Activated T-helper 2 cell treated with anti-CD3 and anti-CD28 coated beads, Interferon-gamma antibody, Interleukin-2, Interleukin-4, amounts not matched to agents 10 μg/mL and 5 μg/mL and 100 μg/mL, durations not matched to agents 14 hours and 24 hours and 36 hours (primary cell): ENCODE measurements at regions of chr11 and their contacts with region 1.

Region 1: DNA sequence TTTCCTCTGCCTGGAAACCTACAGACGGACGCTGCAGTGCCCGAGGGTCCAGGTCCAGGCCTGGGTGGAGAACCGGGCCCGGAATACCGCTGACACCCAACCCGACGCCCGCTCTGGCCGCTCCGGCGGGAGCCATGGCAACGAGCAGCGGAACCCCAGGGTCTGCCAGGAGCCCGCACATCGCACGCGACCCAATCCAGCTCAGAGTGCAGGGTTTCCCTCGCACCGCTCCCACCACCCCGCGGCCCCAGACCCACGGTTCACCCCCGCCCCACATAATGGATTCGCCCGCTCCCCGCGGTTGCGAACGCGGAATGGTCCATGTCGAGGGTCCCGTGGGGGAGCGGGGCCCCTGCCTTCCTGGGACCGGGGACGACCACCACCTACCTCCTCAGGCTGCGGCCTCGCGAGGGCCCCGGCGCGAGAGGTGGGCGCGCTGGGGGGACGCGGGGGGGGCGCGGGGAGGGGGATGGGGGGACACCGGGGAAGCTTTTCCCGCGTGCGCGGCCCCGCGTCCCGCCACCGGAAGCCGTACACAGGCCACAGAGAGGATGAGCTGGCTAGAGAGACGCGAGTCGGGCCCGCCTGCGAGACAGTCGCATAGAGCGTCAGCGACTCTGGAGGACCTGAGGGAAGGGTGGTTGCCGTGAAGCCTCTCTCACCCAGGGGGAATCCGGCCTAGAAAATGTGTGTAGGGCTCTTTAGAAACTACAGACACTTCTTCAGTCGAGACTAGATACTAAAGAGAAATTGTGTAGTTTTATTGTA is at the start of gene SSRP1:
- DNase-seq: peak; percentile 81
- H3K4me3 Mint-ChIP-seq: peak within 1 kb of the TSS; percentile 92
- H3K27ac Mint-ChIP-seq: peak within 1 kb of the TSS; percentile 95
- H3K4me1 Mint-ChIP-seq: peaks cover 29% of the 10 kb centered on the region
- H3K27me3 Mint-ChIP-seq: peaks cover 10% of the 10 kb centered on the region
- total RNA-seq, gene SSRP1: 214 and 218 TPM in 2 replicates

Region 2: GRCh38 chr11:57324886-57325734 is 10.4 kb before region 1 on chr11 and contains the start of gene TNKS1BP1:
- intact Hi-C with region 1: loop called (anchors 1 kb)
- DNase-seq: peak; percentile 86
- H3K4me3 Mint-ChIP-seq: peak within 1 kb of the TSS; percentile 84
- H3K27ac Mint-ChIP-seq: peak within 1 kb of the TSS; percentile 92
- H3K4me1 Mint-ChIP-seq: peaks cover 51% of the 10 kb centered on the region
- H3K27me3 Mint-ChIP-seq: no peaks in the 10 kb centered on the region
- total RNA-seq, gene TNKS1BP1: 15.6 and 16.5 TPM in 2 replicates

Region 3: GRCh38 chr11:57379732-57380131 is 44.2 kb after region 1 on chr11:
- intact Hi-C with region 1: no loop called
- DNase-seq: no peak
- H3K4me3 Mint-ChIP-seq: no peak overlapping the region
- H3K27ac Mint-ChIP-seq: no peak overlapping the region
- H3K4me1 Mint-ChIP-seq: no peaks in the 10 kb centered on the region
- H3K27me3 Mint-ChIP-seq: peaks cover 2% of the 10 kb centered on the region

Region 4: GRCh38 chr11:57406337-57406904 is 70.9 kb after region 1 on chr11:
- intact Hi-C with region 1: loop called (anchors 2 kb)
- DNase-seq: no peak
- H3K4me3 Mint-ChIP-seq: peak overlapping the region; percentile 2
- H3K27ac Mint-ChIP-seq: peak overlapping the region; percentile 98
- H3K4me1 Mint-ChIP-seq: peaks cover 30% of the 10 kb centered on the region
- H3K27me3 Mint-ChIP-seq: no peaks in the 10 kb centered on the region

Region 5: DNA sequence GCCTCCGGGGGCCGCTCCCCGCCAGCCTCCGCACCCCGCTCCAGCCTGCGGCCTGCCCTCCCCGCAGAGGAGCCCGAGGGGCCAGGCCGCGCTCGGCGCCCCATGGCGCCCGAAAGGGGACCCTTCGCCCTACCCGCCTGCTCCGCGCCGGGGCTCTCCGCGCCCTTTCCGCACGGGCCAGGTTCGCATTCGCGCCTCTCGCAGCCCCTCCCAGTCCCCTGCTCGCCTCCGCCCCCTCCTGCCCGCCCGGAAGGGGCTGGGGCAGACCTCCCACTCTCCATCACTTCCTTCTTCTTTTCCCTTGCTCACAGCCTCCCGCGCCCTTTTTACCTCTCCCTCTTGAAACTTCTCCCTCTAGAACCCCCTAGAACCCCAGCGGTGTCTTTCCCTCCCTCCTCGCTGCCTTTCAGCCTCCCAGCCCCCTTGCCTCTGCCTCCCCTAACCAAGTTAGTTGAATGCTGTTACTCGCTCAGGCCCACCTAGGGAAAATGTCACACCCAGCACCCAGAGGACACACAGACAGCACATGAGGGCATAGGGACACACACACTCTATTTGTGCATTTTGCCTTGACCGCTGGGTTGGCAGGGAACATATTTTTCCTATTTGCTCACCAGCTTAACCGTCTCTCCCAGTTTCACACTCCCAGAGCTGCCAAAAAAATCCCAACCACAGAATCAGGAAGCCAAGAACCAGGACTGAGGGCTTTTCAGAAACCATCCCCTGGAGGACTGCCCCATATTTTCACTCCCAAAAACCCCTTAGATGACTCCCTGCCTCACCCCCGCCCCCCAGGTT is 91.6 kb after region 1 on chr11 and contains the start of gene SLC43A3:
- intact Hi-C with region 1: loop called (anchors 5 kb)
- DNase-seq: peak; percentile 66
- H3K4me3 Mint-ChIP-seq: peak within 1 kb of the TSS; percentile 91
- H3K27ac Mint-ChIP-seq: peak within 1 kb of the TSS; percentile 64
- H3K4me1 Mint-ChIP-seq: peaks cover 44% of the 10 kb centered on the region
- H3K27me3 Mint-ChIP-seq: peaks cover 3% of the 10 kb centered on the region
- total RNA-seq, gene SLC43A3: 174 and 189 TPM in 2 replicates

Region 6: GRCh38 chr11:57644748-57645688 is 309.5 kb after region 1 on chr11:
- intact Hi-C with region 1: loop called (anchors 5 kb)
- DNase-seq: peak; percentile 75
- H3K4me3 Mint-ChIP-seq: no peak overlapping the region
- H3K27ac Mint-ChIP-seq: no peak overlapping the region
- H3K4me1 Mint-ChIP-seq: peaks cover 48% of the 10 kb centered on the region
- H3K27me3 Mint-ChIP-seq: peaks cover 46% of the 10 kb centered on the region

Region 7: DNA sequence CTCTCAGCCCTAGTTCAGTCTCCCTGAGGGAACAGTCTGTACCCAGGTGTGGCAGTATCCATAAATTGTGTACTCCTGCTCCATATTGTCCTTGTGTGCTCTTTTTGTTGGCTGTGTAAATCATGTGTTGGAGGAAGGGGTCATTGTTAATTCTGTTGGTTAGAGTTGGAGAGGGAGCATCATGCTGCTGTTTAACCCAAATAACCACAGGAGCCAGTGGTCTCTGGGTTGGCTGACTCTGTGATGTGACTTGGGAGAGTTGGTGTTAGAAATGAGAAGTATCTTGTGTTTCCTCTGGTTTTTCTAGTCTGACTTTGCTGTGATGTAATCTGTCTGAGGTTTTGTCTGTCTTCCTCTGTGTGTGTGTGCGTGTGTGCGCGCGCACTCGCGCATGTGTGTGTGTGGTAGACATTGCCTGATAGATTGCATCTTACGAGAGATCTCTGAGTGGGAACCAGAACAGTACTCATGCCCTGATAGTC is 456.6 kb after region 1 on chr11:
- intact Hi-C with region 1: loop called (anchors 10 kb)
- DNase-seq: peak; percentile 85
- H3K4me3 Mint-ChIP-seq: peak overlapping the region; percentile 45
- H3K27ac Mint-ChIP-seq: peak overlapping the region; percentile 68
- H3K4me1 Mint-ChIP-seq: peaks cover 40% of the 10 kb centered on the region
- H3K27me3 Mint-ChIP-seq: no peaks in the 10 kb centered on the region